AG04449 (cell line): ENCODE measurements at regions of chr1 and their contacts with region 1.

Region 1: GRCh38 chr1:53278201-53278725 is 39.9 kb upstream of the MAGOH start:
- DNase-seq: no peak
- H3K4me3 ChIP-seq: no peak overlapping the region
- CTCF ChIP-seq: peak; percentile 81

Region 2: GRCh38 chr1:53091841-53092645 is 186.2 kb before region 1 on chr1:
- CTCF ChIA-PET with region 1: no interaction called
- POLR2A ChIA-PET with region 1: no interaction called
- DNase-seq: no peak
- H3K4me3 ChIP-seq: no peak overlapping the region
- CTCF ChIP-seq: no peak

Region 3: DNA sequence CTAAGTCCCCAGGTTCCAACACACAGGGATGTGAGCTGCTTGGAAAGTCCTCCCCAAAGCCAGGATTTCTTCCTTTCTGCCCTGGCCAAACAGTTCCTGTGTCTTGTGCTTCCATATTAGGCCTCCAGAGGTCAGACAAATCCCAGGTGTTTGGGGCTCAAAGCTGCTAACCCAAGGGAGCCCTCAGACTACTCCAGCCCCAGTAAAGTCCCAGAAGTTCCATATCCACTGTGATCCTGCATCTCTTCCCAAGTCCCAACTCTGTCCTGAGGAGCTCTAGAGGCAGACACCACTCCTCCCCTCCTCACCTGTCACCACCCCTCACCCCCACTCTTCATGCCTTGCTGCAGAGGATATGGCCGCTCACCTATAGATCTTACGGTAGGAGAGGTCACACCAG is 12.2 kb before region 1 on chr1:
- CTCF ChIA-PET with region 1: interaction called, 178 read pairs
- POLR2A ChIA-PET with region 1: no interaction called
- DNase-seq: no peak
- H3K4me3 ChIP-seq: no peak overlapping the region
- CTCF ChIP-seq: peak; percentile 12

Region 4: DNA sequence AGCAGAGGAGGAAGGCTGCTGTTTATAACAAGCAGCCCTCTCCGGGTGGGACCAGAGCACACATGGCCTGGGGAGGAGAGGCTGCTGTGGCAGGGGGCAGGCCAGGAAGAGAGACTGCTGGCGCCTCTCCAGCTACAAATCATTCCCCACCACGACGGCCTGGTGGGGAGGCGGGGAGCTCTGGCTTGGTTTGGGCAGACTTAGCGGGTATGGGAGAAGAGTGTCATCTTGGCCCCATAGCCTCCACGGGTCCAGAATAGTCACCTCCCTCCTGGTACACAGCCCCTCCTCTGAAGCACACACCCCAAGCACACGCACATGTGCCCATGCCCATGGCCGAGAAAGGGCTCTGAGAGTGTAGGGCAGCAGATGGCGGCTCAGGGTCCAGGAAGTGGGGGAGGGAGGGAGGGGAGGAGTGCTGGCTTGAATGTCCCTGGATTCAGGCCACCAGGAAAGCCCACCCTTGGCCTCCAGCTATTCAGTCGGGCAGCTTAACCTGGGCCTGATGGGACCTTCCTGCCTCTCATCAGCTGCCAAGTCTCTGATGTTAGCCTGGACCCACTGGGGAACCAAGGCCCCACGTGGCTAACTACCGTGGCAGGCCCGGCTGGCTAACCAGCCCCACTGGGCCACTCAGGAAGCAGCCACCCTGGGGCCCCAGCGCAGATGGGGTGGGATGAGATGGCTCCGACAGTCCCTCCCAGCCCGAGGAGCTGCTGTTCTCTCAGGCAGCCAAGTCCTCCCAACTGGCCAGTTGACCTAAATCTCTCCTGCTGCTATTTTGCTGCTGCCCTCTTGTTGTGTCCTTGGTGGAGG is 38.7 kb after region 1 on chr1:
- CTCF ChIA-PET with region 1: interaction called, 11 read pairs
- POLR2A ChIA-PET with region 1: no interaction called
- DNase-seq: no peak
- H3K4me3 ChIP-seq: no peak overlapping the region
- CTCF ChIP-seq: no peak

Region 5: GRCh38 chr1:53393325-53393792 is 115.1 kb after region 1 on chr1:
- CTCF ChIA-PET with region 1: interaction called, 574 read pairs
- POLR2A ChIA-PET with region 1: interaction called, 3 read pairs
- DNase-seq: no peak
- H3K4me3 ChIP-seq: no peak overlapping the region
- CTCF ChIP-seq: peak; percentile 85

Region 6: GRCh38 chr1:53462769-53463501 is 184.7 kb after region 1 on chr1:
- CTCF ChIA-PET with region 1: interaction called, 22 read pairs
- POLR2A ChIA-PET with region 1: no interaction called
- DNase-seq: no peak
- H3K4me3 ChIP-seq: no peak overlapping the region
- CTCF ChIP-seq: no peak

Region 7: DNA sequence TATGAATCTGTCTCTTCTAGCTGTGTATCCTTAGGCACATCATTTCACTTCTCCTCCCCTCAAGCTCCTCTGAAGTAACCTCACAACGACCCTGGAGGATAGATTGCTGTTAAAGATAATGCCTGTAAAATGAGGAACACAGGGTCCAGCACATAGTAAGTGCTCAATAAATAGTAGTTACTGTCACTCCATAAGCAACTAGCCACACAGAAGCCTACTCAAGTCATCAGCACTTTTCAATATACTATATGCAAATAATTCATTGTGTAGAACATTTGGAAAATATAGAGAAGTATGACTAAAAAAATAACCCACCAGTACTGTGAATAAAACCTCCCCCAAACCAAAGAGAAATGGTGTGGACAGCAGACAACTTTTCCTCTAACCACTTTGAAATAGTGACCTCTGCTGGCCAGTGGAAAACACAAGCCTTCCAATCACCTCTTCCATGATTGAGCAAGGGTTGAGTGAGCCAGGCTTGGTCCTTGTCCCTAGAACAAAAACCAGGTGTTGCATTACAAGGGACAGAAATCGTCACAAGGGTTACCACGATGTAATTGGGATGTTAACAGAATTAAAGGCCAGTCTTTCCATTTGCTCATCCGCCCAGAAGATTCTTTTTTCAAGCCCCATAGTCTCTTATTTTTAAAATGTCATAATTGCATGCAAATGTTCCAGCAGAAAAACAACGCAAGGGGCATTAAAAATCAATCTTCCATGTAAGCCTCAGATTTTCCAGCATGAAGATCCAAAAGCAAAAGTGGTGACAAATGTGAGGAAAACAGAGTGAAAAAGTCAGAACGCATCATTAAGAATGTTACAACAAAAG is 476.4 kb after region 1 on chr1:
- CTCF ChIA-PET with region 1: interaction called, 14 read pairs
- POLR2A ChIA-PET with region 1: no interaction called
- DNase-seq: no peak
- H3K4me3 ChIP-seq: no peak overlapping the region
- CTCF ChIP-seq: peak; percentile 72

Region 8: DNA sequence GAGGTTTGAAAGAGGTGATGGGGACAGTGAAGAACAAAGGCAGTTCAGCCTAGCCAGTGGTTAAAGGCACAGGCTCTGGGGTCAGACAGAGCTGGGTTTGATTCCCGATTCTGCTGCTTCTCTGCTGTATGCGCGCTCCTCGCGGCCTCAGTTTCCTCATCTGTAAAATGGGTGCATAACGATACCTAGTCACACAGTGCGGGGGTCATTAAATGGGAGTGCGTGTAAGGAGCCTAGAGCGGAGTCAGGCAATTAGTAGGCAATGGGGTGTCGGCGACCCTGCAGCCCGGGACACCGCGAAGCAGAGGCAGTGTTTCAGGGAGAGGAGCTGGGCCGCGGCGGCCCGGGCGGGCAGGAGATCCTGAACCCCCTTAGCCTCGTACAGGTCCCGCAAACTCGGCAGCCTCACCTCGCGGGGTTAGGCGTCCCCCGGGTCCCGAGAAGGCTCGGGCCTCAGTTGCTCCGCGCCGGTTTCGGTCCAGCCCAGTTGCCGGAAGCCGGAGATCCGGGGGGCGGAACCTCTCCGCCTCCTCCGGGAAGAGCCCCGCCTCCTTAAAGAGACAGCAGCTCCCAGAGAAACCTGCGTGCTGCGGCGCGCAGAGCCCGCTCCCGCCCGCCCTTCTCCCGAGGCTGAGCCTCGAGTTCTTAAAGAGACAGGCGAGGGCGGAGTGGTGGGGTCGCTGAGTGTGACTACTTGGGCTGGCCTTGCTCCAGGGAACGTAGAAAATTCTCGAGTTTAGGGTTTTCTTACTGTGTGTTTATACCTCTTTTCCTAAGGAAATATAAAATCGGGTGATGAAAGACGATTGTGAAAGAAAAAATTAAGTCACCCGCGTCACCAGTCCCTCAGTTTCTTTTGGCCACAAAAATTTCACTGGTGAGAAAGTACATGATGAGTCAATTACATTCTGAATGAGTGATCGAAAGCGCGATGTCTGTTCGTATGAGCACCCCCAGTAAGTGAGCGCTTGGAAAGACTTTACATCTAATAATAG is 611.3 kb after region 1 on chr1 and contains the start of gene YIPF1:
- CTCF ChIA-PET with region 1: no interaction called
- POLR2A ChIA-PET with region 1: no interaction called
- DNase-seq: peak; percentile 38
- H3K4me3 ChIP-seq: peak within 1 kb of the TSS; percentile 99
- CTCF ChIP-seq: no peak